ENCODE measurements at regions of chrX and their contacts with region 1.

Region 1: GRCh38 chrX:2643880-2644279 is 47.2 kb upstream of the CD99 start:
- DNase-seq: no peak
- H3K4me3 ChIP-seq: no peak overlapping the region
- H3K27ac ChIP-seq: no peak overlapping the region
- H3K4me1 ChIP-seq: no peaks in the 10 kb centered on the region
- H3K27me3 ChIP-seq: no peaks in the 10 kb centered on the region
- CTCF ChIP-seq: no peak
- POLR2A ChIP-seq: no peak

Region 2: DNA sequence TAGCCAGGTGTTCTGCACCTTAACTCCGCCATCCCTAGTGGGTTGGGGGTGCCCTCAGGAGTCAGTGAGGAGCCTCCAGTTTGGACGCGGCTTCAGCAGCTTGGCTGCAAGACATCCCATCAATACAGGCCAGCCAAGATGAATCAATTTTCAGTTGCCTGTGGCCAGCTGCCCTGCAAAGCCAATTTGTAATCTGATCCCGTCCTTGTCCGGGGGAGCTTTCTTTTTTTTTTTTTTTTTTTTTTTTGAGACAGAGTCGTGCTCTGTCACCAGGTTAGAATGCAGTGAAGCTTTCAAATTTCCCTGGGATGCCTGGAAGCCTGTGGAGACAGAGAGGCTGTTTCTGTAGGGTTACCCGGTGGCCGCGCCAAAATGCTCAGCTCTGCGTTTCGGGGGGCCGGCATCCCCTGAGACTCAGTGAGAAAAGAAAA is 836.6 kb before region 1 on chrX:
- CTCF ChIA-PET with region 1: no interaction called
- POLR2A ChIA-PET with region 1: no interaction called
- dilution Hi-C with region 1: no loop called
- intact Hi-C with region 1: no loop called
- DNase-seq: no peak
- H3K4me3 ChIP-seq: no peak overlapping the region
- H3K27ac ChIP-seq: no peak overlapping the region
- H3K4me1 ChIP-seq: no peaks in the 10 kb centered on the region
- H3K27me3 ChIP-seq: no peaks in the 10 kb centered on the region
- CTCF ChIP-seq: no peak
- POLR2A ChIP-seq: no peak

Region 3: DNA sequence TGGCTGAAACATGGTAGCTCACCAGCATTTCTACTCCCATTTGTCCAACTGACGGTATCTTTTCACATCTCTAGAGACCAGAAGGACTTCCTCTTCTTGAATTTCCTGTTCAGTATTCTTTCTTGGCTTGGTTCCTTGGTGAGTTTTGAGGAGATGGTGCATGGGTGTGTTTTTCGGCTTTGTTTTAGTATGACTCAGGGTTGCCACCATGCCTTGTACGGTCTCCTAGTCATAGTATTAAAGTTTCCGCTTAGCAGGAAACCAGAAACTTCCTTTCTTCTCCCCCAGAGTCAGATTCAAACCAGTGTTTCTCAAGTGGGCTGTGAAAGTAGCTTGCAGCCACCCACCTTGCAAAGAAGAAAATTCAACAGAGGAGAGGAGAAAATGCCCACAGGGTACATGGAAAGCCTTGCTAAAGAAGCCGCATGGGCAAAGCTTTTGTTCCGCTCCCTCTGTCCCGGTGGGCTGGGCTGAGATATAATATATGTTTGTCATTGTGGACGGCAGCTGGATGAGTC is 52.9 kb after region 1 on chrX:
- CTCF ChIA-PET with region 1: no interaction called
- POLR2A ChIA-PET with region 1: no interaction called
- dilution Hi-C with region 1: no loop called
- intact Hi-C with region 1: loop called (anchors 1 kb)
- DNase-seq: peak; percentile 96
- H3K4me3 ChIP-seq: peak overlapping the region in 1 of 3 experiments; percentile 49
- H3K27ac ChIP-seq: peak overlapping the region; percentile 87
- H3K4me1 ChIP-seq: peaks cover 61% of the 10 kb centered on the region
- H3K27me3 ChIP-seq: no peaks in the 10 kb centered on the region
- CTCF ChIP-seq: no peak
- POLR2A ChIP-seq: no peak

Region 4: DNA sequence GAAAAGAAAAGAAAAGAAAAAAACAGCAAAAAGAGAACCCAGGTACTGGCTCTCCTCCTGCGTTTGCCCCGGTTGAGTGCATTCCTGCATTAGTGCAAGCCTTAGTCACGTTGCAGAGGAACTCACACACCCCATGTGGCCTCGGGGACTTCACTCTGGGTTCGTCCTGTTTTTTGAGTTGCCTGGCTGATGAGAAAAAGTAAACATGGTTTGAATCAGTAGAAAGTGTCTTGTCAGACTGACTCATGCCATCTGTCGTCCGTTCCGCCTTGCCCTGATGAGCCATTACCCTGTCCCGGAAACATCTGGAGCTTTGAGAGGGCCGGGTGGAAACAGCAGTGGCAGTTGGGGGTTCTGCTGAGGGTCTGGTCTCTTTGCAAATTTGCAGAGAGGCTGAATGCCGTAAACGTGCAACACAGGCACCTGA is 63.5 kb after region 1 on chrX:
- CTCF ChIA-PET with region 1: no interaction called
- POLR2A ChIA-PET with region 1: no interaction called
- dilution Hi-C with region 1: no loop called
- intact Hi-C with region 1: loop called (anchors 2 kb)
- DNase-seq: peak; percentile 60
- H3K4me3 ChIP-seq: no peak overlapping the region
- H3K27ac ChIP-seq: peak overlapping the region; percentile 76
- H3K4me1 ChIP-seq: peaks cover 74% of the 10 kb centered on the region
- H3K27me3 ChIP-seq: no peaks in the 10 kb centered on the region
- CTCF ChIP-seq: no peak
- POLR2A ChIP-seq: no peak

Region 5: DNA sequence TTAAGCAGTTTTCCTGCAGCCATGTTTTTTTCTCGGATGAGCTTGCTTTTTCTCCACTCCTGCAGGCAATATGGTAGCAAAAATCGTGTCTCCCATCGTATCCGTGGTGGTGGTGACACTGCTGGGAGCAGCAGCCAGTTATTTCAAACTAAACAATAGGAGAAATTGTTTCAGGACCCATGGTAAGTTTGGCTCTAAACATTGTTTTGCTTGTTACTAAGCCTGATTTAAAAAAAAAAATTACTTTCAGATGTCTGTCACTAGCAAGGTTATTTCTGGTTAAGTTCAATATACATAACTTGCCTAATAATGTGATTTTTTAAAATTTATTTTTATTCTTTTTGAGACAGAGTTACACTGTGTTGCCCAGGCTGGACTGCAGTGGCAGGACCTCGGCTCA is 167.4 kb after region 1 on chrX:
- CTCF ChIA-PET with region 1: no interaction called
- POLR2A ChIA-PET with region 1: no interaction called
- dilution Hi-C with region 1: no loop called
- intact Hi-C with region 1: loop called (anchors 1 kb)
- DNase-seq: no peak
- H3K4me3 ChIP-seq: no peak overlapping the region
- H3K27ac ChIP-seq: no peak overlapping the region
- H3K4me1 ChIP-seq: no peaks in the 10 kb centered on the region
- H3K27me3 ChIP-seq: no peaks in the 10 kb centered on the region
- CTCF ChIP-seq: no peak
- POLR2A ChIP-seq: no peak

Region 6: GRCh38 chrX:2819345-2820135 is 175.7 kb after region 1 on chrX:
- CTCF ChIA-PET with region 1: no interaction called
- POLR2A ChIA-PET with region 1: no interaction called
- dilution Hi-C with region 1: no loop called
- intact Hi-C with region 1: loop called (anchors 1 kb)
- DNase-seq: peak; percentile 20
- H3K4me3 ChIP-seq: no peak overlapping the region
- H3K27ac ChIP-seq: no peak overlapping the region
- H3K4me1 ChIP-seq: no peaks in the 10 kb centered on the region
- H3K27me3 ChIP-seq: peaks cover 0 to 2% of the 10 kb centered on the region in 2 experiments
- CTCF ChIP-seq: peak; percentile 6 to 29
- POLR2A ChIP-seq: no peak

Measured in endothelial cell of umbilical vein (primary cell).